ENCODE measurements at regions of chr5 and their contacts with region 1.

Region 1: DNA sequence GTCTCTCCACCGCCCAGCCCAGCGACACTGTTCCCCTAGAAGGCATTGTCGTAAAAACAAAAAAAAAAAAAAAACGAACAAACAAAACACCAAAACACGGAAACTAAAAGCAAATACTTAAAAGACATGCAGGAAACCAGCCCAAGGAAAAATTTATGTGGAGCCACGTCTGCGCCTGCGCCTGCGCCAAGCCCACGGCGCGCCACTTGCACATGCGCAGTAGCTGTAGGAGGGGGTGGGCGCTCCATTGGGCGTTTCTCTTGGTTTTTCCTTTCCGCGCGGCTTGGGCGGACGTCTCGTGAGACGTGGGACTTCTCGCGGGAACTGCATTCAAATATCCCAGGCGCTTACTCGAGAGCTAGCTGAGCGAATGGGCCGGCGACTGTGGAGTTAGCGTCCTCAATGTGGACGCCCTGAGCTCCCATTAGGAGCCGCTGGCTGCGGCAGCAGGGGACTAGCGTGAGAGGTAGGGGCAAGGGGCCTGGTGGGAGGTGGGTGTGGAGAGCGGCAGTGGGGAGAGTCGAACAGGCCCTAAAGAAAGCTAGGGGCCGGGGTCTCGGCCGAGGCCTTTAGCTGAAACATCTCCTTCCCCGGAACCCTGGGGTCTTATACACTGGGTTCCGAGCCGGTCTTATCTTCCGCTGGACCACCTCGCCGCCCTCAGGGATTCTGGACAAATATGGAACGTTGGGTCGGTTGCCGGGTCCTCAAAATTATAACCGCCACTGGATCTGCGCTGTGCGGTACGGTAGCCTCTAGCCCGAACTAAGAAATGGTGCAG is at the start of gene SPDL1:
- DNase-seq: peak; percentile 92 to 96
- ATAC-seq: peak; percentile 98 to 99 (median 98)
- H3K4me3 ChIP-seq: peak within 1 kb of the TSS; percentile 86
- H3K27ac ChIP-seq: peak within 1 kb of the TSS; percentile 70
- H3K4me1 ChIP-seq: peaks cover 7% of the 10 kb centered on the region
- H3K27me3 ChIP-seq: no peaks in the 10 kb centered on the region
- CTCF ChIP-seq: no peak
- total RNA-seq, gene SPDL1: 1.7 to 2.9 (median 2.4) TPM

Region 2: DNA sequence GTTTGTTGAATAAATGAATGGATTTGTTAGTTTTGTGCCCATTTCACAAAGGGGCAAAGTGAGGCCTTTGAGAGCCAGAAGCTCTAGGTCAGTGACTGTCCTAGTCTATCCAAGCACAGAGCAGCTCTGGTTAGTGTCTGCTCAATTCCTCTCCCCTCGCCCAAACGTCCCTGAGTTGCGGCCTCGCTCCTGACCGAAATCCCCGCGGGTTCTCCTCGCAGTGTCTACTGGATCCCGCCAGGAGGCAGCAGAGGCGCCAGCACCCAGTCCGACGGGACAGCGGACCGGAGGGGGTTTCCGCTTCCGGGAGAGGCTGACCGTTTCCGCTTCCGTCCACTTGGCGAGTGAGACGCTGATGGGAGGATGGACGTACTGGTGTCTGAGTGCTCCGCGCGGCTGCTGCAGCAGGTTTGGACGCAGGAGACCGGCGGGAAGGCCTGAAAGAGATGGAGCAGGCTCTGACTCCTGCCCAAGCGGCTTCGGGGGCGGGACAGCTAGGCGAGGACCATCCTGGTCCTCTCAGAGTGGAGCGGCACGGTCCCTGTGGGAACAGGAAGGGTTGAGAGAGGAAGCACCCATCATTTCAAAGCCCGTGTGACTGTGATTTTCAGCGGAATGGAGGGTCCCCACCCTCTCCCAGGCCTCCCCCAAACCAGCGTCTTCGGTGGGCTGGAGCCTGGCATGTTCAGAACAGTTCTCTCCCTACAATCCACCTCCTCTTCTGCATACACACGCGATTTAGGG is 1097.3 kb before region 1 on chr5 and contains the start of gene RARS1:
- intact Hi-C with region 1: loop called in 1 of 2 experiments (anchors 10 kb)
- DNase-seq: peak; percentile 94 to 97
- ATAC-seq: peak; percentile 97 to 100 (median 100)
- H3K4me3 ChIP-seq: peak within 1 kb of the TSS; percentile 92
- H3K27ac ChIP-seq: peak within 1 kb of the TSS; percentile 32
- H3K4me1 ChIP-seq: peaks cover 5% of the 10 kb centered on the region
- H3K27me3 ChIP-seq: no peaks in the 10 kb centered on the region
- CTCF ChIP-seq: peak; percentile 95
- total RNA-seq, gene RARS1: 31.6 to 40.4 (median 37.8) TPM

Region 3: GRCh38 chr5:168679515-168679920 is 904.1 kb before region 1 on chr5:
- intact Hi-C with region 1: loop called in 1 of 2 experiments (anchors 5 kb)
- DNase-seq: peak; percentile 53 to 74
- ATAC-seq: peak in 3 of 4 donors; percentile 37 to 65 (median 63)
- H3K4me3 ChIP-seq: no peak overlapping the region
- H3K27ac ChIP-seq: no peak overlapping the region
- H3K4me1 ChIP-seq: no peaks in the 10 kb centered on the region
- H3K27me3 ChIP-seq: no peaks in the 10 kb centered on the region
- CTCF ChIP-seq: peak; percentile 85

Region 4: DNA sequence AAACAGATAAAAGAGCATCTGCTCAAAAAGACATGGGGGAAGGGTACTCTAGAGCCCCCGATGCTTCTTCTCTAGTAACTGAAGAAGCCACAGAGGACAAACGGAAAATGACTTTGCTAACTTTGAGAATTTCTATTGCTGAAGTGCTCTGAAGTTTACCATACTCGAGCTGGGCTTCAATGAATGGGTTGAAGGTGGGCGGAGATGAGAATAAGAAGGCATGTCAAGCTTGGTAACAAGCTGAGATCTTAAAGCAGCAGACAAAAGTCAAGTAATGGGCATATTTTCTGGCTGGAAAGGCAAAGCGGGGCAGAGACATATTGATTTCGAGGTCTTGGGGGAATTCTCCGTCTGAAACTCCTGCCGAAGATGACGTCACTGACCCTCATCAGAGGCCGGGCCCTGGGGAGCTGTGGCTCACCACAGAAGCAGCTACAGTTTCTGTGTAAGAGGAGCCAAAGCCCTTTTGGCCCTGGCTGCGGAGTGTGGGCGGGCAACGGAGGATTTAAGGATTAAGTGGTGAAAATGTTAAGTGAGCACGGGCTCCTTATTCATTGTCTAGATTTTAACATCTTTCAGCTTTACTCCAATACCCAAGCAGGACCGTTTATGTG is 166.9 kb before region 1 on chr5:
- intact Hi-C with region 1: no loop called
- DNase-seq: peak; percentile 61 to 66
- ATAC-seq: no peak
- H3K4me3 ChIP-seq: no peak overlapping the region
- H3K27ac ChIP-seq: no peak overlapping the region
- H3K4me1 ChIP-seq: no peaks in the 10 kb centered on the region
- H3K27me3 ChIP-seq: no peaks in the 10 kb centered on the region
- CTCF ChIP-seq: no peak

Measured in psoas muscle (tissue), 8 donors.